Ascending aorta (tissue), 2 donors: ENCODE measurements at regions of chr14 and their contacts with region 1.

Region 1: DNA sequence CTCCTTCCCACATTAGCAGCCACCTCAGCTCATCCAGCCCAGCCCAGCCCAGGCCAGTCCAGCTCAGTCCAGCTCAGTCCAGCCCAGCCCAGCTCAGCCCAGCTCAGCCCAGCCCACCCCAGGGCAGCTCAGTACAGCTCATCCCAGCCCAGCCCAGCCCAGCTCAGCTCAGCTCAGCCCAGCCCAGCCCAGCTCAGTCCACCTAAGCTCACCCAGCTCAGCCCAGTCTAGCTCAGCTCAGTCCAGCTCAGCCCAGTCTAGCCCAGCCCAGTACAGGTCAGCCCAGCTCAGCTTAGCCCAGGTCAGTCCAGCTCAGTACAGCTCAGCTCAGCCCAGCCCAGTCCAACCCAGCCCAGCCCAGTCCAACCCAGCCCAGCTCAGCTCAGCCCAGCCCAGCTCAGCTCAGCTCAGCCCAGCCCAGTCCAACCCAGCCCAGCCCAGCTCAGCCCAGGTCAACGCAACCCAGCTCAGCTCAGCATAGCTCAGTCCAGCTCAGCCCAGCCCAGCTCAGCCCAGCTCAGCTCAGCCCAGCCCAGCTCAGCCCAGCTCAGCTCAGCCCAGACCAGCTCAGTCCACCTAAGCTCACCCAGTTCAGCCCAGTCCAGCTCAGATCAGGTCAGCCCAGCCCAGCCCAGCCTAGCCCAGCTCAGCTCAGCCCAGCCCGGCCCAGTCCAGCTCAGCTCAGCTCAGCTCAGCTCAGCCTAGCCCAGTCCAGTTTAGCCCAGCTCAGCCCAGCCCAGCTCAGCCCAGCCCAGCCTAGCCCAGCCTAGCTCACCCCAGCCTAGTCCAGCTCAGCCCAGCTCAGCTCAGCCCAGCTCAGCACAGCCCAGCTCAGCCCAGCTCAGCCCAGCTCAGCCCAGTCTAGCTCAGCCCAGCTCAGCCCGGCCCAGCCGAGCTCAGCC is 63.0 kb downstream of the TMEM121 start:
- DNase-seq: peak in 1 of 2 donors; percentile 56
- H3K4me3 ChIP-seq: no peak overlapping the region
- H3K27ac ChIP-seq: no peak overlapping the region
- H3K4me1 ChIP-seq: no peaks in the 10 kb centered on the region
- H3K27me3 ChIP-seq: no peaks in the 10 kb centered on the region
- CTCF ChIP-seq: no peak

Region 2: GRCh38 chr14:105203057-105203531 is 386.3 kb before region 1 on chr14:
- intact Hi-C with region 1: no loop called
- DNase-seq: peak in 1 of 2 donors; percentile 89
- H3K4me3 ChIP-seq: no peak overlapping the region
- H3K27ac ChIP-seq: no peak overlapping the region
- H3K4me1 ChIP-seq: peaks cover 4 to 26% of the 10 kb centered on the region in 2 donors
- H3K27me3 ChIP-seq: peaks cover 8% of the 10 kb centered on the region
- CTCF ChIP-seq: peak; percentile 81 to 92 (median 87)

Region 3: DNA sequence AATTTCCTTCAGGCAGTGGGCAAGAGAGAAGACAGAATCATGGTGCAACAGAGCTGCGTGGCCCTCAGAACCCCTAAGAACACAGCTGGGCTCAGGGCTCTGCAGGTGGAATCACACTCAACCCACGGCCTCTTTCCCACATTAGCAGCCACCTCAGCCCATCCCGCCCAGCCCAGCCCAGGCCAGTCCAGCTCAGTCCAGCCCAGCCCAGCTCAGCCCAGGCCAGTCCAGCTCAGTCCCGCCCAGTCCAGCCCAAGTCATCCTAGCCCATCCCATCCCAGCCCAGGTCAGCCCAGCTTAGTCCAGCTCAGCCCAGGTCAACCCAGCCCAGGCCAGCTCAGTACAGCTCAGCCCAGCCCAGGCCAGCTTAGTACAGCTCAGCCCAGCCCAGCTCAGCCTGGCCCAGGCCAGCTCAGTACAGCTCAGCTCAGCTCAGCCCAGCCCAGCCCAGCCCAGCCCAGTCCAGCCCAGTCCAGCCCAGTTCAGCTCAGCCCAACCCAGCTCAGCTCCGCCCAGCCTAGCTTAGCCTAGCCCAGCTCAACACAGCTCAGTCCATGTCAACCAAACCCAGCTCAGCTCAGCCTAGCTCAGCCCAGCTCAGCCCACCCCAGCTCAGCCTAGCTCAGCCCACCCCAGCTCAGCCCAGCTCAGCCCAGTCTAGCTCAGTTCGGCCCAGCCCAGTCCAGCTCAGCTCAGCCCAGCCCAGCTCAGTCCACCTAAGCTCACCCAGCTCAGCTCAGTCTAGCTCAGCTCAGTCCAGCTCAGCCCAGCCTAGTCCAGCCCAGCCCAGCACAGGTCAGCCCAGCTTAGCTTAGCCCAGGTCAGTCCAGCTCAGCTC is 120.1 kb after region 1 on chr14:
- intact Hi-C with region 1: loop called (anchors 5 kb)
- DNase-seq: no peak
- H3K4me3 ChIP-seq: no peak overlapping the region
- H3K27ac ChIP-seq: no peak overlapping the region
- H3K4me1 ChIP-seq: no peaks in the 10 kb centered on the region
- H3K27me3 ChIP-seq: no peaks in the 10 kb centered on the region
- CTCF ChIP-seq: no peak

Region 4: DNA sequence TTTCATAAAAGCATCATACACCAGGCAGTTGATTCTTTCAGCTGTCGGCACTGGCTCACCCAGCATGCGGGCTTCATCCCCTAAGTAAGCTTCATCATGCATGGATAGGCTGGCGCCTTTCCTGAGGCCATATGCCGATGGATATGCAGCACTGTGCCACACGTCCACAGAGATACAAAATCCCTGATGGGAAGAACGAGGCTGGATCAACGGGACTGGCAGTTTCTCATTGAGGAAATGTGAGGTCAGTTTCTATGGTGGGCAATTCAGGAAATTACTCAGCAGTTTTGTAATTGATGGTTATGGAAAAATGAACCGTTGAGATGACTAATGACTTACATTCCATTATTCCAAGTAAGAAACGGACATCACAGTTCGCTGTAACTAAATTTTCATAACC is 390.8 kb after region 1 on chr14:
- intact Hi-C with region 1: no loop called
- DNase-seq: no peak
- H3K4me3 ChIP-seq: no peak overlapping the region
- H3K27ac ChIP-seq: no peak overlapping the region
- H3K4me1 ChIP-seq: no peaks in the 10 kb centered on the region
- H3K27me3 ChIP-seq: no peaks in the 10 kb centered on the region
- CTCF ChIP-seq: no peak